Gastrocnemius medialis (tissue), 4 donors: ENCODE measurements at regions of chr6 and their contacts with region 1.

Region 1: DNA sequence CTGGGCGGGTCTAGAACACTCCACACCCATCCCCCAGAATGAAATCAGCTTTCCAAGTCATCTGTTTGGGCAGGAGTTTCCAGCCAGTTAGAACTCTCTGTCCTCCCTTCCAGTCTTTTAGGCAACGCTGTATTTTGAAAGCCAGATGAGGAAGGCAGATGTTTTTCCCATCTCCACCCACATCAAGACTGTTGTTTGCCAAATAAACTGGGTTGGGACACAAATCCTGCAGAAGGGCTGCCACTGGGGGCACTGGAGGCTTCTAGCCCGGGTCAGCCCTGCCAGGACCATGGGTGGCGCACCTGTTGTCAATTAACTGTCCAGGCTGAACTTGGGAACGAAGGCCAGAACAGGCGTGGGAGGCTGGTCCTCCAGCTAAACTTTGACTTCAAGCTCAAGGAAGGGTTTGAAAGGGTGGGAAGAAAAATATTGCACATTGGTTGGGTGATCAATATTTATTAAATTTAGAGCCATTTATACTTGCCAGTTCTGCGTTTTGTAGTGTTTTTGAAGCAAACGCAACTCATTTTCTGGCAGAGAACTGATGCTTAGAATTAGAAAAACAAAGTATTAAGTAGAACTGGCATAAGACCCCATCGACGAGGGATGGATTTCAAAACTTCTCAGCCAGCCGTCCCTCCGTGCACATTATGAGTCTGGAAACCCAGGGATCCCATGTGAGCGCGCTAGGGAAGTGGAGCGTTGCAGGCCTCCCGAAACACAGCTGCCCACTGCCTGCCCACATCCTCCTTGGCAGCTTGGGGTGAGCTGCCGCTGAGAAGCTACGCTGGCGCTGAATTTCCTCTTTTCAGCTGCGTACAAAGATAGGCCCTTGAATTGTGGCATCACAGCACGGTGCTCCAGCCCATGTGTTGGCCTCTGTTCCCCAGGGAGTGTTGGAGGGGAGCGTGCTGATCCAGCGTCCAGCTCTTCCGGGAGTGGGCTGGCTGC is 297.4 kb downstream of the QKI start:
- DNase-seq: peak; percentile 87 to 96
- ATAC-seq: peak; percentile 78
- H3K4me3 ChIP-seq: no peak overlapping the region
- H3K27ac ChIP-seq: peak overlapping the region; percentile 71 to 90 (median 75)
- H3K4me1 ChIP-seq: peaks cover 58 to 63% of the 10 kb centered on the region in 2 donors
- H3K27me3 ChIP-seq: no peaks in the 10 kb centered on the region
- CTCF ChIP-seq: peak; percentile 40 to 66 (median 47)
- POLR2A ChIP-seq: no peak

Region 2: DNA sequence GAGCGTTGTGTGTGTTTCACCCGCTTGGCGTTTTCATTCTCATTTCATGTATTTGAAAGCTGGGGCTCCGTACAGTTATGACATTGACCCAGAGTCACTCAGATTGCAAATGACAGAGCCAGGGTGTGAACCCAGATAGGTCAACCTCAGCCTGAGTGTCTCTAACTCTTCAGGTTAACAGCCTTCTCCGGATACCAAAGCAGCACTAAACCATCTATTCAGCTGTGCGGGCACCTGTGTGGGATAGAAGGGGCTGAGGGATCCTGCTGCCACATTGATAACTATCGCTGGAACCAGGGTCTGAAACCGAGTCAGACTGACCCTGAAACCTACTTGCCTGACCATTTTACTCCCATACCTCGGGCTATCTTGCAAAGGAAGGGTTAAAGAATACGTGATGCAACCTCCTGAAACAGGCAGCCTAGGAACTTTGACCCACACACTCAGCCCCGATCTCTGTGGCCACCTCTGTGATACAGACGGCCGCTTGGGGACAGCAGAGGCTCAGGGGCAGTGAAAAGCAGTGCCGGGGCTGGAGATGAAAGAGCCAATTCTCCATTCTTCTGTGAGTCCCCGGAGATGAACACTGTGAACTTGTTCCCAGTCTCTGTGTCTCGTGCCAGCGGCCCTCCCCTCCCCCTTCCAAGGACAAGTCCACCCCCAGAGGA is 530.9 kb before region 1 on chr6:
- in situ Hi-C with region 1: no loop called
- intact Hi-C with region 1: loop called (anchors 5 kb)
- DNase-seq: peak; percentile 64 to 87
- ATAC-seq: peak; percentile 89 to 96
- H3K4me3 ChIP-seq: peak overlapping the region; percentile 17 to 54 (median 42)
- H3K27ac ChIP-seq: peak overlapping the region; percentile 50 to 69 (median 63)
- H3K4me1 ChIP-seq: peaks cover 17 to 31% of the 10 kb centered on the region in 2 donors
- H3K27me3 ChIP-seq: no peaks in the 10 kb centered on the region
- CTCF ChIP-seq: peak; percentile 81 to 97 (median 87)
- POLR2A ChIP-seq: no peak

Region 3: DNA sequence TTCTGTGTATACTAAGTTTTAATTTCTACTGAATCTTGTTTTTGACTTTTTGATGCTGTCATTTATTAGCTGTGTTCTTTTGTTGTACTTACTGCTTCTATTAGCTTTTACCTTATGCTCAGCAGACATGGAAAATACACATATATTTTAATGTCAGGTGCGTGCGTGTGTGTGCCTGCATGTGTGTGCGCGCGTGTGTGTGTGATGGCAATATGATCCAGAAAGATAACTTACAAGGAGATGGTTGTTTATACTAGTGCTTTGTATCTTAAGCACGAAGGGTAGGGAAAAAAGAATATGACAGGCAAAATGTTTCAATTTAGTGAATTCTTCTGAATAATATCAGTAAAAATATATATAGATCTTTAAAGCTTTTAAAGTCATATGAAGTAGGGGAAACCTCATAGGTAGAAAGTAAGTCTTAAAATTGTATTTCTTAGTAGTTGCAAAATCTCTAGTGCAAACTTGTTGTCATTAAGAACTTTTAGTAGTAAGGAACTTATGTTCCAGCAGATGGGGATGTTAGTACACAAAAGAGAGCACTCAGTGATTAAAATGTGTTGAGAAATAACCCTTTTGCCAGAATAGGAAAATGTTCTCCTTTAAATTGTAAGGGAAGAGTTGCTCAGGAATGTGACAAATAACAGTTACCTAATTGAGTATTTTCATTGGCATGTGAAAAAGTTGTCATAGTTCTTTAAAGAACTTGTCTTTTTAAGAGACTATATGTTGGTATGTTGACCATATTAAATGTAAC is 284.2 kb before region 1 on chr6:
- in situ Hi-C with region 1: loop called in 2 of 4 experiments (anchors 10 to 25 kb)
- intact Hi-C with region 1: loop called (anchors 2 kb)
- DNase-seq: no peak
- ATAC-seq: peak; percentile 62 to 68
- H3K4me3 ChIP-seq: peak overlapping the region in 3 of 4 donors; percentile 13 to 26 (median 17)
- H3K27ac ChIP-seq: peak overlapping the region; percentile 98 to 99 (median 99)
- H3K4me1 ChIP-seq: peaks cover 96 to 100% of the 10 kb centered on the region in 2 donors
- H3K27me3 ChIP-seq: no peaks in the 10 kb centered on the region
- CTCF ChIP-seq: peak in 4 of 5 experiments; percentile 33 to 83 (median 44)
- POLR2A ChIP-seq: no peak

Region 4: GRCh38 chr6:163460307-163460782 is 251.5 kb before region 1 on chr6:
- in situ Hi-C with region 1: loop called in 1 of 4 experiments (anchors 25 kb)
- intact Hi-C with region 1: no loop called
- DNase-seq: no peak
- ATAC-seq: peak; percentile 5 to 7
- H3K4me3 ChIP-seq: peak overlapping the region; percentile 34 to 56 (median 49)
- H3K27ac ChIP-seq: peak overlapping the region; percentile 76 to 98 (median 80)
- H3K4me1 ChIP-seq: peaks cover 88 to 92% of the 10 kb centered on the region in 2 donors
- H3K27me3 ChIP-seq: no peaks in the 10 kb centered on the region
- CTCF ChIP-seq: no peak
- POLR2A ChIP-seq: no peak

Region 5: DNA sequence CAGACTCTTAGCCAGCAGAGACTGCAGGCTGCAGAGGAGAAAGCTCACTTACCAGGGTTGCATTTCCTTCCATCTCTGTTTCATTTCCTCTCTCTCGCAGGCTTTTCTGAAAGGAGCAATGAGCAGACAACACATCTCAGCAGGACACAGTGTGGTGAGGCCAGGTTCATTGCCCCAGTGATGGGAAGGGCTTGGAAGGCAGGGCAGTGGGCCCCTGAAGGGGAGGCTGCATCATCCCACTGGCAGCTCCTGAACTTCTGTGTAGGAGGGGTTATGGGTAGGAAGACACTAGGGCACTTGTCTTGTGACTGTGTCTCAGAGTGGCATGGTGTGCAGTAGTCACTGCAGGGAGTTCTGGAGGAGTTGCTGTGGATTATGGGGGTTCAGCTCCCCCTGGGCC is 50.6 kb before region 1 on chr6:
- in situ Hi-C with region 1: no loop called
- intact Hi-C with region 1: loop called (anchors 2 kb)
- DNase-seq: no peak
- ATAC-seq: peak in 1 of 2 donors; percentile 4
- H3K4me3 ChIP-seq: no peak overlapping the region
- H3K27ac ChIP-seq: no peak overlapping the region
- H3K4me1 ChIP-seq: peaks cover 17 to 23% of the 10 kb centered on the region in 2 donors
- H3K27me3 ChIP-seq: no peaks in the 10 kb centered on the region
- CTCF ChIP-seq: no peak
- POLR2A ChIP-seq: no peak

Region 6: DNA sequence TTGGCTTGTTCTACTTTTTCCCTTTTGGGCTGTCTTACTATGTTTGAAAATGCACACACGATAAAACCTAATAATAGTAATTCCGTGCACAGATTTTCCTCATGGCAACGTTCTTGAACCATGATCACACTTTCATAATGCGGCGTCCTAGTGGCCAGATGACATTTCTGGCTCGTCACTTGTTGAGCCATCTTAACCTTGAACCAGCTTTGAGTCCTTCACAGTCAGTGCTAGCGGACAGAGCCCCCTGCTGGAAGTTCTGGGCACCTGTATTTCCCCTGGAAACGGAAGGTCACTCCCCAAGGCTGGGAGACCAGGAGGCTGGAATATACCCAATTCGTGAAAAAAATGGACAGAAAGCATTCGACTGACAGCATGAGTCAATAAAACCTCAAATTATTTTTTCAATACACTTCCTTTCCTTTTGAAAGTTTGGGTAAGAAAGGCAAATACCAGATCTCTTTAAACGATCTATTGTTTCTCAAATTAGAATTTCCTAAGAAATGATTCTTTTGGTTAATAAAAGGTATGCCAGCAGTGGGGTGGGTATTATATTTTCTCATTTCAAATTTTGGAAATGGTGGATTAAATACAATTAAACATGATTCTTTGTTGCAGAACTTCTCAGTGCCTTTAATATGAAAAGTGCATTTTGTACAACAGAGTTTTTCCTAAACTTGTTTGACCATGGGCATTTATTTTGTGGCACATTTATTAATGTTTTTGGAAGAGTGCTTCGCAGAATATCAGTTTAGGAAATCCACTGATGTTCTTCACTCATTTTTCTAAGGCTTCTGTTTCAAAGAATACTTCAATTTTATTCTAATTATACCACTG is 244.9 kb after region 1 on chr6:
- in situ Hi-C with region 1: loop called in 3 of 4 experiments (anchors 5 to 10 kb)
- intact Hi-C with region 1: loop called (anchors 2 kb)
- DNase-seq: peak; percentile 78 to 91
- ATAC-seq: peak; percentile 88 to 96
- H3K4me3 ChIP-seq: peak overlapping the region in 1 of 4 donors; percentile 23
- H3K27ac ChIP-seq: peak overlapping the region; percentile 78 to 99 (median 92)
- H3K4me1 ChIP-seq: peaks cover 38 to 52% of the 10 kb centered on the region in 2 donors
- H3K27me3 ChIP-seq: no peaks in the 10 kb centered on the region
- CTCF ChIP-seq: peak; percentile 94 to 96 (median 95)
- POLR2A ChIP-seq: no peak